Calu3 (cell line): ENCODE measurements at regions of chr12 and their contacts with region 1.

Region 1: GRCh38 chr12:68807576-68808387 is at the start of gene MDM2:
- DNase-seq: peak; percentile 98
- H3K4me3 Mint-ChIP-seq: peak within 1 kb of the TSS; percentile 97
- H3K27ac Mint-ChIP-seq: peak within 1 kb of the TSS; percentile 90
- H3K4me1 Mint-ChIP-seq: no peaks in the 10 kb centered on the region
- H3K27me3 Mint-ChIP-seq: no peaks in the 10 kb centered on the region
- CTCF ChIP-seq: peak; percentile 78
- total RNA-seq, gene MDM2: 97.1 and 101 TPM in 2 replicates

Region 2: GRCh38 chr12:68745904-68746571 is 61.7 kb before region 1 on chr12 and contains the start of gene SLC35E3:
- CTCF ChIA-PET with region 1: interaction called, 9 read pairs
- intact Hi-C with region 1: loop called (anchors 5 kb)
- DNase-seq: peak; percentile 94
- H3K4me3 Mint-ChIP-seq: peak within 1 kb of the TSS; percentile 98
- H3K27ac Mint-ChIP-seq: peak within 1 kb of the TSS; percentile 60
- H3K4me1 Mint-ChIP-seq: peaks cover 8% of the 10 kb centered on the region
- H3K27me3 Mint-ChIP-seq: no peaks in the 10 kb centered on the region
- CTCF ChIP-seq: no peak
- total RNA-seq, gene SLC35E3: 7.9 and 10.8 TPM in 2 replicates

Region 3: DNA sequence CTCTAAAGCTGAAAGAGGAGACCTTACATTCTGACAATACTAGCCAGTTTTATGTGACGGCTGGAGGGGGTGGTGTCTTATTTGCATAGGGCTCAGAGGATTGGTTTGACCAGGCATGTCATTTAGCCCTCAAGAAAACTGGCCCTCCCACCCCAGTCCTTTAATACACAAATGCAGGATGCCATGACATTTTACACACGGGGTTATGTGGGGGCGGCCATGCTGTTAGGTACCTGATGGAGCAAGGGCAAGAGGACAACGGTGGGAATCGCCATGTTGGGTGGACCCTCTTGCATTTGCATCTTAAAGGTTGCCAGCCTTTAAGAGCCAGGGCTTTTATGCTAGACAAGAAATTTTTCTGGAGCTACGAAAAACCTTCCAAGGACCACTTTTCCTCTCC is 23.5 kb after region 1 on chr12:
- CTCF ChIA-PET with region 1: interaction called, 10 read pairs
- intact Hi-C with region 1: no loop called
- DNase-seq: no peak
- H3K4me3 Mint-ChIP-seq: no peak overlapping the region
- H3K27ac Mint-ChIP-seq: no peak overlapping the region
- H3K4me1 Mint-ChIP-seq: no peaks in the 10 kb centered on the region
- H3K27me3 Mint-ChIP-seq: no peaks in the 10 kb centered on the region
- CTCF ChIP-seq: no peak